Prostate gland (tissue), 2 donors: ENCODE measurements at regions of chr22 and their contacts with region 1.

Region 1: DNA sequence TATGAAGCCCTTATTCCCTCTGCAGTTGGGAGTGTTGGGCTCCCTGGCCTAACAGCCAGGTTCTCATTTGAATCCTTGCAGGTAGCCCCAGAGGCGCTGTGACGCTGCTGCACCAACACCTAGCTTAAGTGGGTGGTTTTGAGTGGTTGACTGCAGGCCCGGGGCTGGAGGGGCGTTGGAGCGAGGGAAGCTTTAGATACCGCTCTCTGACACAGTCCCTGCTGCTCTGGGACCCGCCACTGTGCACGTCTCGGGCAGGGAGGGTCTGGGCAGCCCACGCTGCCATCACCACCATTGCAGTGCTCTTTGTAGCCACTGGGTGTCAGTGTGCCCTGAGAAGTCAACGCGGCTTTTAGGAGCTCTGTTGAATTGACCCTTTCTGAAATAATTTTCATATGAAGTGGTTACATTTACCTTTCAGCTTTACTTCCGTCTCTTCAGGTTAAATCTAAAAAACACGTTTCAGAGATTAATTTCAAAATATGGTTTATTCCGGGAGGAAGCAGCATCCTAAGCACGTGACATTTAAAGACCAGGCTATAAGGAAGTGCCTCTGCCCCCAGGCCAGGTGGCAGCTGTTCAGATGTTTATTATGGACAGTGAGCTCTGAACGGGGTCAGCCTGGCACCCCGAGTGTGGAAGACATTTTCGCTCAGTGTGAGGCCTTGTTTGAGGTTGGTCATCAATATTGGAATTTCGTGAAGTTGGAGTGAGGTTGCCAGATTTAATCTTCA is 30.9 kb upstream of the PARVB start:
- DNase-seq: peak; percentile 20
- H3K4me3 ChIP-seq: no peak overlapping the region
- H3K27ac ChIP-seq: no peak overlapping the region
- H3K4me1 ChIP-seq: no peaks in the 10 kb centered on the region
- H3K27me3 ChIP-seq: no peaks in the 10 kb centered on the region
- CTCF ChIP-seq: peak; percentile 72 to 86 (median 86)
- POLR2A ChIP-seq: no peak

Region 2: DNA sequence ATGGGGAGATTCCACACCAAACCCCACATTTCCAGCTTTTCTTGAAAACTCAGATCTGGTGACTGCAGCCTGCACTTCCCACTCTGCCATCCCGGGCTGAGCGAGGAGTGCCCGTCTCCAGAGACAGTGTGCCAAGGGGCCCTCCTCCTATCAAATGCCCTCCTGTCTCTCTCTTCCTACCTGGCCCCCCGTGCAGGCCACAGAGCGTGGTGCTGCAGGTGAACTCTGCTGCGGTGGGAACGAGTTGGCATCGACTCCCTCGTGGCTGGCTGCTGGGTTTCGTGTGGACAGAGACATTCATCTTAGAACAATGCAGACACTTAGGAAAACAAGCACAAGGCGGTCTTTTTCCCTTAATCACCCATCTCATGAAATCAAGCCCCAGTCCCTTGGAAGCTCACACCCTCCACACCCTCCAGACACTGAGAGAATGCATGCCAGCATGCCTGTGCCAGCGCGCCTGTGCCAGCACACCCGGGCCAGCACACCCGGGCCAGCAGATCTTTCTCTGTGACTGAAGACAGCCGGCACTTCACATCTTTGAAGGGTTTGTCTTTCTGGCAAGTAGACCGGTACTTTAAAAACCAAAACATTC is 95.9 kb after region 1 on chr22:
- intact Hi-C with region 1: loop called (anchors 2 kb)
- DNase-seq: peak; percentile 54
- H3K4me3 ChIP-seq: no peak overlapping the region
- H3K27ac ChIP-seq: no peak overlapping the region
- H3K4me1 ChIP-seq: no peaks in the 10 kb centered on the region
- H3K27me3 ChIP-seq: no peaks in the 10 kb centered on the region
- CTCF ChIP-seq: no peak
- POLR2A ChIP-seq: no peak

Region 3: DNA sequence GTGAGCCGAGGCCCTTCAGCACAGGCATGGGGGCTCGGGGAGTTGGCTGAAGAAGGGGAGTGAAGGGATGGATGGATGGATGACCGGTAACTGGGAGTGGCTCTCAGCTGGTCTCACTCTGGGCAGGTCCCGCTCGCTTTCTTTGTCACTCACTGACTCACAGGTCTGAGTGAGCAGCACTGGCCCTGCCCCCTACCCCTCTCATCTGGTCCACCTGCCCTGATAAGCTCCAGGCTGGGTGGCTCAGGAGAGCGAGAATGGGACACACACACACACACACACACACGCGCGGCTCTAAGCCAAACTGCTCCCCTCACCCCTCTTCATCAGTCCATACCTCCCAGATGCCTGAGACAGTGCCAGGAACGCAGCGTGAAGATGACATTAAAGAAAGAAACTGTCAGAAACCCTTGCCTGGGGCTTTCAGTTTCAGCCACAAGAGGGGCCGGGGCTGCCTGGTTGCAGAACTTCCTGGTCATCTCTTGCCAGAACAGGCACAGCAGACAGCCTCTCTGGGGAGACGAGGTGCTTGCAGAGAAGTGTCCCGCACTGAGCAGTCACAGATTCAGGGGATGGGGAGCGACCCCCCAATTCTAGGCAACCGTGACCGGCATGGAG is 336.1 kb after region 1 on chr22:
- intact Hi-C with region 1: loop called (anchors 10 kb)
- DNase-seq: no peak
- H3K4me3 ChIP-seq: no peak overlapping the region
- H3K27ac ChIP-seq: no peak overlapping the region
- H3K4me1 ChIP-seq: no peaks in the 10 kb centered on the region
- H3K27me3 ChIP-seq: peaks cover 7% of the 10 kb centered on the region
- CTCF ChIP-seq: no peak
- POLR2A ChIP-seq: no peak